Activated B cell treated with CpG ODN at 0.5 μM for 24 hours (primary cell): ENCODE measurements at regions of chr4 and their contacts with region 1.

Region 1: DNA sequence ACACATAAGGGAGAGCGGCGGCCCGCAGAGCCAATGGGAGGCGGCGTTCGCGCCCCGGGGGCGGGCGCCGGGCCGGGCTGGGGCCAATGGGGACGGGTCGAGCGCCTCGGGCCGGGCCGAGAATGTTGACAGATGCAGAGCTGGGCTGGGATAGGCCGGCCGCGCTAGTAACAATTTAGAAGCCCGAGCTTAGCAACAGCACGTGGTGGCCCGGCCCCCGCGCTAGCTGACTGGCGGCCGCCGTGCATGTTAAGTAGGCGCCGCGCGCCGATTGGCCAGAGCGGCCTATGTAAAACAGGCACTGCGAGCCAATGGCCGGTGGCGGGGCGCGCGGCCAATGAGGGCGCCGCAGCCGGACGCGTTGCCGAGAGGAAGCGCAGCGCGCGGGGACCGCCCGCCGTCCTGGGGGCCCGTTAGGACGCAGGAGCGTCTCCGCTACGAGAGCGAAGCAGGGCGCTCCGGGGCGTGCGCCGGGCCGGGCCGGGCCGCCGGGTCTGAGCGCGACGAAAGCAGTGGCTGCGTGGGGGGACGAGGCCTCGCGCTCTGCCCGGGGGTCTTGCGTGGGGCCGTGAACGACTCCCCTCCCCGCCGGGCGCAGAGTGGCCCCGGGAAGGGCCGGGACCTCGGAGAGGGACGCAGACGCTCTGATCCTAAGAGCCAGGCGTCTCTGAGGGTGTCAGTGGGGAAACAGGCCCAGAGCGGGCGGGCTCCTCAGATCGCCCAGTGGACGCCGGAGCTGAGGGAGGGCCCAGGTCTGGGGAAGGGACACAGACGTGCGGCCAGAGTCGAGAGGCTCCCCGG is 434 bp upstream of the MXD4 start:
- DNase-seq: peak; percentile 95
- ATAC-seq: peak; percentile 89
- H3K4me3 Mint-ChIP-seq: peak overlapping the region; percentile 78
- H3K27ac Mint-ChIP-seq: peak overlapping the region; percentile 85
- H3K4me1 Mint-ChIP-seq: peaks cover 18% of the 10 kb centered on the region
- H3K27me3 Mint-ChIP-seq: no peaks in the 10 kb centered on the region
- CTCF ChIP-seq: no peak

Region 2: GRCh38 chr4:1523907-1524636 is 738.3 kb before region 1 on chr4:
- CTCF ChIA-PET with region 1: no interaction called
- POLR2A ChIA-PET with region 1: no interaction called
- intact Hi-C with region 1: no loop called
- DNase-seq: no peak
- ATAC-seq: no peak
- H3K4me3 Mint-ChIP-seq: no peak overlapping the region
- H3K27ac Mint-ChIP-seq: no peak overlapping the region
- H3K4me1 Mint-ChIP-seq: peaks cover 4% of the 10 kb centered on the region
- H3K27me3 Mint-ChIP-seq: peaks cover 41% of the 10 kb centered on the region
- CTCF ChIP-seq: no peak

Region 3: GRCh38 chr4:1928356-1929239 is 333.7 kb before region 1 on chr4:
- CTCF ChIA-PET with region 1: no interaction called
- POLR2A ChIA-PET with region 1: no interaction called
- intact Hi-C with region 1: no loop called
- DNase-seq: no peak
- ATAC-seq: no peak
- H3K4me3 Mint-ChIP-seq: no peak overlapping the region
- H3K27ac Mint-ChIP-seq: no peak overlapping the region
- H3K4me1 Mint-ChIP-seq: no peaks in the 10 kb centered on the region
- H3K27me3 Mint-ChIP-seq: no peaks in the 10 kb centered on the region
- CTCF ChIP-seq: no peak

Region 4: GRCh38 chr4:2220016-2220630 is 42.2 kb before region 1 on chr4:
- CTCF ChIA-PET with region 1: no interaction called
- POLR2A ChIA-PET with region 1: no interaction called
- intact Hi-C with region 1: no loop called
- DNase-seq: peak; percentile 62
- ATAC-seq: peak; percentile 97
- H3K4me3 Mint-ChIP-seq: no peak overlapping the region
- H3K27ac Mint-ChIP-seq: no peak overlapping the region
- H3K4me1 Mint-ChIP-seq: peaks cover 4% of the 10 kb centered on the region
- H3K27me3 Mint-ChIP-seq: no peaks in the 10 kb centered on the region
- CTCF ChIP-seq: peak; percentile 94

Region 5: DNA sequence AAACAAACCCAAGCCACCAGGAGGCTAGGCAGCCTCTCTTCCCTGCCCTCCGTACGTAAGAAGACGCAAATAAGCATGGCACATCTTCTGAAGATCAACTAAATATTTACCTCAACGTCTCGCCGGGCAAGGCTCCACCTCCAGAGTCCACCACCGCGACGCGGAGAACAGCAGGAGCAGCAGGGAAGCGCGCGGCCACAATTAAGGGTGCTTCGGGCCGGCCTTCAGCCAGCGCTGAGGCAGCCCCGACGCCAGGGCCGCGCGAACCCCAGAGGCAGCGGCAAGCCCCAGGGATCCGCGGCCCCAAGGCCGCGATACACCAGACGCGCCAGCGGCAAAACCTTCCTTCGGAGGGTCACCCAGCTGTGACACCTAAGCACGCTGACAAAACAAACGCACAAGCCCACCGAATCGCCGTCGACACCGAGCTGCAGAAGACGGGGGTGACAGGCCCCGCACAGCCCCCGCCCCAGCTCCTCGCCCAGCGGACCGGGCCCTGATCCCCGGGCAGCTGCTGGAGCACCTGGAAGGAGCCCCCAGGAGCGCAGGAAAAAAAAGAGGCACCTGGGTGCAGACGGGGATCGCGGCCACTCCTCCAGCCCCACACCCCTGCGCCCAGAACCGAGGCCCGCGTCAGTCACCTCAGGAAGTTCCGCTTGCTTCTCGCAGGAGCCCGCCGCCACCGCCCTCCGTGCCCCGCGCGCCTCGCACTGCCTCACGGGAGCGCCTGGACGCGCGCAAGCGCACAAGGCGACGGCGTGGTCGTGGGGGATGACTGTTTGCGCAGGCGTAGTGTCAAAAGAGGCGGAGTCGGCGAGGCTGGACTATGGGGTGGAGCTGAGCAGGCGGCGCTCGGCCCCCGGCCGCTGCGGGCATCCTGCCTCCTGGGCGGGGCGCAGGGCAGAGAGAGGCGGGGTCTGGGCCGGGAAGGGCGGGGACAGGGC is 20.7 kb before region 1 on chr4 and contains the starts of genes HAUS3 and POLN:
- CTCF ChIA-PET with region 1: no interaction called
- POLR2A ChIA-PET with region 1: interaction called, 21 read pairs
- intact Hi-C with region 1: loop called (anchors 1 kb)
- DNase-seq: peak; percentile 99
- ATAC-seq: peak; percentile 96
- H3K4me3 Mint-ChIP-seq: peak within 1 kb of the TSS; percentile 91
- H3K27ac Mint-ChIP-seq: peak within 1 kb of the TSS; percentile 86
- H3K4me1 Mint-ChIP-seq: peaks cover 54% of the 10 kb centered on the region
- H3K27me3 Mint-ChIP-seq: no peaks in the 10 kb centered on the region
- CTCF ChIP-seq: no peak
- total RNA-seq, gene HAUS3: 17.9 and 19.0 TPM in 2 replicates
- total RNA-seq, gene POLN: 1.4 and 1.7 TPM in 2 replicates

Region 6: GRCh38 chr4:2296631-2297601 is 34.6 kb after region 1 on chr4:
- CTCF ChIA-PET with region 1: no interaction called
- POLR2A ChIA-PET with region 1: interaction called, 4 read pairs
- intact Hi-C with region 1: loop called (anchors 5 kb)
- DNase-seq: peak; percentile 12
- ATAC-seq: no peak
- H3K4me3 Mint-ChIP-seq: no peak overlapping the region
- H3K27ac Mint-ChIP-seq: no peak overlapping the region
- H3K4me1 Mint-ChIP-seq: peaks cover 16% of the 10 kb centered on the region
- H3K27me3 Mint-ChIP-seq: no peaks in the 10 kb centered on the region
- CTCF ChIP-seq: no peak

Region 7: DNA sequence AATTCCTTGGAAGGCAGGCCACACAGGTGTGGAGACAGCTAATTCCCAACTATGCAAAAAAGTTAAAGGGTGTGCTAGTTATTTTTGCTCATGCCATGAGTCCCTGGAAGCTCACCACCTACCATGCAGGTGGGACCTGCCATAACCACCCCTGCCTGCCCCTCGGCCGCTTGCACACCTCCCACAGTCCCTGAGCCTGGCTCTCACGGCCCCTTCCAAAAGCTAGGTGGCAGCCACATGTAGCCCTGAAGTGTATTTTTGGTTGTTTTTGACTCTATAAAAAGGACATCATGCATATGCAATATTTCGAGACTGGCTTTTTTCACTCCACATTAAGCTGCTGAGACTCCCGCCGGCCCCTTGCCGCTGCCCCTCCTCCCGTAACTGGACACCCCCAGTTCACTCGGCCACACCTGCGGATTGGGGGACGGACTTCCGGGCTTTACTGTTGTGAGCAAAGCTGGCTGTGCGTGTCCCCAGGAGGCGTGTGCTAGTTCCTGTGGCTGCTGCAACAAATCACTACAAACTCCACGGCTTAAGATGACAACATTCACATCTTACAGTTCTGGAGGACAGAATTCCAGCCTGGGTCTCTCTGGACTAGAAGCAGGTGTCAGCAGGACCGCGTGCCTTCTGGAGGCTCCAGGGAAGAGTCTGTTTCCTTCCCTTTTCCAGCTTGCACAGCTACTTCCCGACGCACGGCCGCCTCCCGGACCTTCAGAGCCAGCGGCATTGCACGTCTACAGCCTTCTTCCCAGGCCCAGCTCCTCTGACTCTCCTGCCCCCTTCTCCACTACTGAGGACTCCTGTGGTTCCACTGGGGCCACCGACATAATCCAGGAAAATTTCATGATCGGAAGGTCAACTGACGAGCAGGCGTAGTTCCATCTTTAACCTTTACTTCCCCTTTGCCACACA is 131.3 kb after region 1 on chr4:
- CTCF ChIA-PET with region 1: no interaction called
- POLR2A ChIA-PET with region 1: interaction called, 14 read pairs
- intact Hi-C with region 1: no loop called
- DNase-seq: no peak
- ATAC-seq: peak; percentile 72
- H3K4me3 Mint-ChIP-seq: peak overlapping the region; percentile 81
- H3K27ac Mint-ChIP-seq: peak overlapping the region; percentile 73
- H3K4me1 Mint-ChIP-seq: peaks cover 32% of the 10 kb centered on the region
- H3K27me3 Mint-ChIP-seq: peaks cover 11% of the 10 kb centered on the region
- CTCF ChIP-seq: no peak

Region 8: GRCh38 chr4:2468445-2469192 is 206.3 kb after region 1 on chr4 and contains the start of gene RNF4:
- CTCF ChIA-PET with region 1: interaction called, 3 read pairs
- POLR2A ChIA-PET with region 1: interaction called, 10 read pairs
- intact Hi-C with region 1: loop called (anchors 1 kb)
- DNase-seq: peak; percentile 83
- ATAC-seq: peak; percentile 87
- H3K4me3 Mint-ChIP-seq: peak within 1 kb of the TSS; percentile 96
- H3K27ac Mint-ChIP-seq: peak within 1 kb of the TSS; percentile 94
- H3K4me1 Mint-ChIP-seq: peaks cover 51% of the 10 kb centered on the region
- H3K27me3 Mint-ChIP-seq: no peaks in the 10 kb centered on the region
- CTCF ChIP-seq: no peak
- total RNA-seq, gene RNF4: 93.5 and 93.6 TPM in 2 replicates

Region 9: GRCh38 chr4:2583517-2583916 is 321.2 kb after region 1 on chr4:
- CTCF ChIA-PET with region 1: no interaction called
- POLR2A ChIA-PET with region 1: no interaction called
- intact Hi-C with region 1: no loop called
- DNase-seq: no peak
- ATAC-seq: no peak
- H3K4me3 Mint-ChIP-seq: no peak overlapping the region
- H3K27ac Mint-ChIP-seq: no peak overlapping the region
- H3K4me1 Mint-ChIP-seq: peaks cover 51% of the 10 kb centered on the region
- H3K27me3 Mint-ChIP-seq: no peaks in the 10 kb centered on the region
- CTCF ChIP-seq: no peak